Cardiac septum (tissue), 1 donor: ENCODE measurements at regions of chr4 and their contacts with region 1.

Region 1: GRCh38 chr4:122602277-122603142 is 18.4 kb downstream of the IL21 start:
- DNase-seq: no peak

Region 2: DNA sequence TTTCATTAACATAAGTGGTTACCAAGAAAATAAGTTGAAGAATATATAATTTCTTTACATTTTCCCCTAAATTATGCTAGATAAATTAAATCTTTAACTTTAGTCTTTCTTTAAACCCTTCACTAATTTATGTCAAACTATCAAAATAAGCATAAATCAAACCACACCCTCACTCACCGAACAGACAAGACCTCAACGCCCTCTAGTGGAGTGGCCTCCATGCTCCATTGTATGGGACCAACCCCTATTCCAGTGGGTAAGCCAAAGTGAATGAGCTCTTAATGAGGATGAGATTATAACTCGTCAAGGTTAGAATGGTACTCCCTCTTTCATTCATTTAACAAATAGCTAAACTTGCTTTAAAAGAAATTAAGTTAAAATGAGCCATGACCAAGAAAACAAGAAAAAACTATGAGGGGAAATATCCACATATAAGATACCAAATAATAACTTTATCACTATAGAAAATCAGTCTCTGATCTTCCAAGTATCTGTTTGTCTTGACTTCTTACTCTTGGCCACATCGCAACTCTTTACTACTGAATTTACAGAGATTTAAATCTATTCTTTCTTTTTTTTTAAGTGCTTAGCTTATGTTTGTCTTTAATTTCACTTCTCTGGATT is 114.4 kb after region 1 on chr4:
- intact Hi-C with region 1: loop called (anchors 2 kb)
- DNase-seq: no peak

Region 3: GRCh38 chr4:122928930-122929329 is 326.4 kb after region 1 on chr4:
- intact Hi-C with region 1: loop called (anchors 5 kb)
- DNase-seq: no peak